Naive thymus-derived CD4-positive, alpha-beta T cell (primary cell): ENCODE measurements at regions of chr9 and their contacts with region 1.

Region 1: DNA sequence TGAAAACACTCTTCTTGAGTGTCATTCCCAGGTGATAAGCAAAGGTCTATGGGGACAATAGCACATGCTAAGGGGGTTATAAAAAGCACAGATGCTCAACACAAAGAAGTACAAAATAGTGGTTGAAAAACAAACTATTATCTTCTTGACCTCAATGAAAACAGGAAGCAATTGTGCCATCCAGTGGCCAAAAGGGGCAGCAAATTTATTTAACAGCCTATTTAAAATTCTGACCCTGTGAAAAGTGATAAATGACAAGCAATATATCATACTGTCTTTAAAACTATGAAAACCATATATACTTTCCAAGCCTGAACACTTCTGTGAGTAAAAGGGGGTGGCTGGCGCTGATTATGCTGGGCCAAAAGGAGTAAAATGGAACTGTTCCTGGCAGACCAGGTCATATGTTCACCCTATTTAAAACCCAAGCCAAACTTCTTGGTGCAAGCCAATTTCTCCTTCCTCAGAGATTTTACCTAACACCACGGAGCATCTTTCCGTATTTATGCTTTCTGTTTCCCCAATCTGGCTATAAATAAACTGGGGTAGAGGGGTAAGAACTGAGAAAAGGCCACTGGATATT is 29.7 kb downstream of the TEX10 start:
- DNase-seq: no peak
- ATAC-seq: no peak
- H3K4me3 ChIP-seq: no peak overlapping the region
- H3K4me3 Mint-ChIP-seq: no peak overlapping the region
- H3K27ac ChIP-seq: no peak overlapping the region
- H3K27ac Mint-ChIP-seq: peak overlapping the region in 2 of 9 donors; percentile 14 to 57
- H3K4me1 ChIP-seq: no peaks in the 10 kb centered on the region
- H3K4me1 Mint-ChIP-seq: peaks cover 0 to 27% (median 16%) of the 10 kb centered on the region in 7 donors
- H3K27me3 ChIP-seq: no peaks in the 10 kb centered on the region
- H3K27me3 Mint-ChIP-seq: no peaks in the 10 kb centered on the region

Region 2: DNA sequence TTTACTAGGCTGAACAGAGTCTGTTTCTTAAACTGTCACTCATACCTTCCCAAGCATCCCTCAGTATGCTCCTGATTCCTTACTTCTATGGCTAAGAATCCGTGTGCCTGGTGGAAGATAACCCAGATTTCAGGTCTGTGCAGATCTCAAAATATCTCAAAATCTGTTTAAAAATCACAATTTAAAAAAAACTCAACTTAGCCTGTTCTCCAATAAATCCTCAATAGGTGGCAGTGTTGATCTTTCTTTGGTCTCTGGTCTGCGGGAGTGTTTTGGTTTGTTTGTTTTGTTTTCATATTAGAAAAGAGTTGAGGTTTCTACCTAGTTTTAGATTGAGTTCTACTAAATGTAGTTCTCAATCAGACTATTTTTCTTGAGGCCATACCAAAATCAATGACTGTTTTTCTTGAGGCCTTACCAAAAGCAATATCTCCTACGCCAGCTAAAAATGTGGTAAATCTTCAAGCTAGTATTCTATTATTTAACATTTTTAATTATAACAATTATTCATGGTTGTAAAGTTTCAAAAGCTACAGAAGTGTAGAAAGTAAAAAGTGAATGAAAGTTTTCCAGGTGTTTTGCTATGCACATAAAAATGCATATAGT is 1160.2 kb before region 1 on chr9:
- CTCF ChIA-PET with region 1: no interaction called
- POLR2A ChIA-PET with region 1: no interaction called
- intact Hi-C with region 1: loop called in 1 of 2 experiments (anchors 1 kb)
- DNase-seq: peak in 7 of 9 donors; percentile 22 to 59 (median 47)
- ATAC-seq: peak; percentile 61
- H3K4me3 ChIP-seq: no peak overlapping the region
- H3K4me3 Mint-ChIP-seq: peak overlapping the region in 1 of 10 donors; percentile 0
- H3K27ac ChIP-seq: no peak overlapping the region
- H3K27ac Mint-ChIP-seq: no peak overlapping the region
- H3K4me1 ChIP-seq: peaks cover 0 to 8% of the 10 kb centered on the region in 2 donors
- H3K4me1 Mint-ChIP-seq: peaks cover 9 to 32% (median 17%) of the 10 kb centered on the region in 7 donors
- H3K27me3 ChIP-seq: no peaks in the 10 kb centered on the region
- H3K27me3 Mint-ChIP-seq: peaks cover 7 to 32% (median 10%) of the 10 kb centered on the region in 5 donors

Region 3: DNA sequence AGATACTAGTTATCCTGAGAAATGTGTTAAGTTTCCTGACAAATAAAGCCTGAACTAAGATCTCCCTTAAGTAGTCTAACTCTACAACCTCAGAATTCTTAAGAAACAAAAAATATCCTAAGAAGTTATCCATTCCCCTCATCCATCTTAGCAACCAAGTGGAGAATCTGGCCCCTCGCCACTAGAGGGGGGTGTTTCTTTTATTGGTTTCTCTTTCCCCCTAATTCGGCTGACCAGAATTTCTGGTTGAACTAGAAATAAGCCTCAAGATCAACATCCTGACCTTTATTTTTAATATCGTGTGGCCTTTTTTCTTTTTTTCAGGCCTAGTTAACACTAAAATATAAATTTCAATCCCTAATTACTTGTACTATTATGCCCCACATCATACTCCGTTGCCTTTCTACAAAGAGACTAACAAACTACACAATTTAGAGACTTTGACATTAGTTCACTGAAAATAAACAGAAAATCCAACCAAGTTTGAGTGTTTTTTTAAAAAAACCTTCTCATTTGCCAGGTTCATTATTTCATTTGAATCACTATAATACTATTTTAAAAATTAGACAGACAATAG is 515.7 kb before region 1 on chr9:
- CTCF ChIA-PET with region 1: no interaction called
- POLR2A ChIA-PET with region 1: no interaction called
- intact Hi-C with region 1: loop called (anchors 1 to 2 kb)
- DNase-seq: peak in 8 of 9 donors; percentile 31 to 76 (median 68)
- ATAC-seq: peak; percentile 89
- H3K4me3 ChIP-seq: no peak overlapping the region
- H3K4me3 Mint-ChIP-seq: no peak overlapping the region
- H3K27ac ChIP-seq: no peak overlapping the region
- H3K27ac Mint-ChIP-seq: peak overlapping the region in 4 of 9 donors; percentile 1 to 63 (median 12)
- H3K4me1 ChIP-seq: peaks cover 0 to 5% of the 10 kb centered on the region in 2 donors
- H3K4me1 Mint-ChIP-seq: peaks cover 0 to 23% (median 4%) of the 10 kb centered on the region in 7 donors
- H3K27me3 ChIP-seq: no peaks in the 10 kb centered on the region
- H3K27me3 Mint-ChIP-seq: peaks cover 0 to 12% (median 0%) of the 10 kb centered on the region in 5 donors

Region 4: DNA sequence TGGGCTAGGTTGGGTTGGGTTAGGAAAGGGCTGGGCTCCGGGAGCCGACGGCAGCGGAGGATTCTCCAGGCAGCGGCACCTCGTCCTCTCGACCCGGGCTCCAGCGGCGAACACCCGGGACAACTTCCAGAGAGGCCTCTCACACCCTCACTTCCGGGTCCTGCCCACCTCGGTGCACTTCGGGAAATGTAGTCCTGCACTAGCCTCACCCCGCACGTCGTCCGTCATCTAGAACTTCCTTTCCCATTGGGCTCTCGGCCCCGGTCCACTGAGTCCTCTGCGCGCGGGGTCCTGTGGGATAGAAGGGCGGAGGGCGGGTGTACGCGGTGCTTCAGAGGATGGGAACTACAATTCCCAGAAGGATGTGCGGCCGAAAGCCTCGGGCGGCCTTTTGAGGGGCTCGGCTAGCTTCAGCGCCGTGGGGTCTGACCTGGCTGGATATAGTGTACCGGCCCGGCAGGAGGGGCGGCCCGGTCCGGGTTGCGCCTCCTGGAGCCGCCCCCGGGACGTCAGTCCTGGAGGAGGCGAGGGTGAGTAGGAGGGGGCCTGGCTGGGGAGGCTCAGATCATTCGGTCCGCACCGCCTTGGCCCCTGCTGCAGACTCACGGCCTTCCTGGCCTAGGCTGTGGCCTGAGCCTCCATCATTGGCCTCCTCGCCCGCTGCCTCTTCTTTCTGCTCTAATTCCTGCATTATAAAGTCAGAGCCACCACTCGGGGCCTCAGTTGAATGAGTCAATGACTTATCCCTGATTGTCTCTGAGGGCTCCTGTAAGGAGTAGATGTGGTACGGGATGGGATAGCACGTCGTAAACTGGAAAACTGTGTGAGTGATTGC is 223.9 kb before region 1 on chr9 and contains the starts of genes ERP44 and INVS:
- CTCF ChIA-PET with region 1: no interaction called
- POLR2A ChIA-PET with region 1: no interaction called
- intact Hi-C with region 1: loop called (anchors 5 to 10 kb)
- DNase-seq: peak; percentile 82 to 98 (median 94)
- ATAC-seq: peak; percentile 99
- H3K4me3 ChIP-seq: peak within 1 kb of the TSS; percentile 93
- H3K4me3 Mint-ChIP-seq: peak within 1 kb of the TSS; percentile 94 to 100 (median 98)
- H3K27ac ChIP-seq: peak within 1 kb of the TSS; percentile 89
- H3K27ac Mint-ChIP-seq: peak within 1 kb of the TSS; percentile 84 to 99 (median 97)
- H3K4me1 ChIP-seq: peaks cover 18 to 25% of the 10 kb centered on the region in 2 donors
- H3K4me1 Mint-ChIP-seq: peaks cover 26 to 53% (median 43%) of the 10 kb centered on the region in 7 donors
- H3K27me3 ChIP-seq: no peaks in the 10 kb centered on the region
- H3K27me3 Mint-ChIP-seq: no peaks in the 10 kb centered on the region
- total RNA-seq, gene ERP44: 9.8 to 19.5 (median 15.2) TPM
- total RNA-seq, gene INVS: 15.0 to 20.8 (median 20.6) TPM

Region 5: GRCh38 chr9:100352727-100353505 is 29.9 kb after region 1 on chr9 and contains the start of gene TEX10:
- CTCF ChIA-PET with region 1: interaction called, 3 read pairs
- POLR2A ChIA-PET with region 1: no interaction called
- intact Hi-C with region 1: loop called in 1 of 2 experiments (anchors 2 kb)
- DNase-seq: peak; percentile 80 to 94 (median 87)
- ATAC-seq: peak; percentile 96
- H3K4me3 ChIP-seq: peak within 1 kb of the TSS; percentile 79
- H3K4me3 Mint-ChIP-seq: peak within 1 kb of the TSS; percentile 87 to 99 (median 94)
- H3K27ac ChIP-seq: peak within 1 kb of the TSS; percentile 82
- H3K27ac Mint-ChIP-seq: peak within 1 kb of the TSS; percentile 77 to 94 (median 86)
- H3K4me1 ChIP-seq: peaks cover 8 to 22% of the 10 kb centered on the region in 2 donors
- H3K4me1 Mint-ChIP-seq: peaks cover 32 to 62% (median 53%) of the 10 kb centered on the region in 7 donors
- H3K27me3 ChIP-seq: no peaks in the 10 kb centered on the region
- H3K27me3 Mint-ChIP-seq: no peaks in the 10 kb centered on the region
- total RNA-seq, gene TEX10: 11.0 to 24.6 (median 18.2) TPM